ENCODE measurements at regions of chr10 and their contacts with region 1.

Region 1: GRCh38 chr10:96826438-96826837 is 5.7 kb upstream of the LCOR start:
- DNase-seq: no peak
- H3K4me3 ChIP-seq: no peak overlapping the region
- CTCF ChIP-seq: no peak
- POLR2A ChIP-seq: no peak

Region 2: DNA sequence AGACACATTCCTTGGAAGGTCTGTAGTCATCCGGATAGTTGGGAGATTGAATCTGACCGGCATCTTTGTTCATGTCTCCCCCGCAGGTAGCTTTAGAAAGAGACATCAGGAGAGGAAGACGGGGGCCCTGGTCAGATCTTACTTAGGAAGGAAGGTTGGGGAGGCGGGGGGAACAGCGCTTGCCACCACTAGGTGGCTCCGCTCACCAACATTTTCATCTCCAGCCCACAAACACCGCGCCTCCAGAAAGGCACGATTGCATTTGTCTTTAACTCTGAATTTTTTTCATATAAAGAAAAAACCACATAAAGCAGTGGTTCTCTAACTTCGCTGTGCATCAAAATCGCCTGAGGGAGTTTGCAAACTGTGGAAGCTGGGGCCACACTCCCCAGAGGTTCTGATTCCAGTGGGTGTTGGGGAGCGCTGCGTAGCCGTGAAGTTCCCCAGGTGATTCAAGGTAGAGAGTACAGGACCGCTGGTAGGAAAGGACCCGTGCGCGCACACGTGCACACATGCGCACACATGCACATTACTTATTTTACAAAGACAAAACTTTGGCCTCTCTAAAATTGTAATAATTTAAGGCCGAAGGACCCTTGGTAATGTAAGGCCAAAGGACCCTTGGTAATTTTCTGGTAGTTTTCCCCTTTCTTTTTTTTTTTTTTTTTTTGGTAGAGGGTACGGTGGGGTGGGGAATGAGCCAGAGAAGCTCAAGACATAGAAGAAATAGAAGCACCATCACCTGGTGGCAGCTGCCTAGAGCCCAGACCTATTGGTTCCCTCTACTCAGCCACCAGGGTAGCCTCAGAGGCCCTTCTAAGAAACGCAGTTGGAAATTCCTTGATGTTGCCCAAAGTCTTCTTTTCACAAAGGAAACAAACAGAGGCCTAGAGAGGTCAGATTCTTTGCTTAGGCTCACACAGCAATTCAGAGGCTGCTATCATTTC is 430.2 kb before region 1 on chr10:
- intact Hi-C with region 1: loop called (anchors 10 kb)
- DNase-seq: peak; percentile 30 to 93
- H3K4me3 ChIP-seq: no peak overlapping the region
- CTCF ChIP-seq: peak in 1 of 3 donors; percentile 24
- POLR2A ChIP-seq: no peak